ENCODE measurements at regions of chr16 and their contacts with region 1.

Region 1: GRCh38 chr16:58123896-58124600 is 5.1 kb downstream of the CFAP20 start:
- DNase-seq: no peak
- H3K4me3 ChIP-seq: no peak overlapping the region
- H3K27ac ChIP-seq: peak overlapping the region; percentile 96
- H3K4me1 ChIP-seq: peaks cover 97% of the 10 kb centered on the region
- H3K27me3 ChIP-seq: no peaks in the 10 kb centered on the region
- CTCF ChIP-seq: no peak

Region 2: DNA sequence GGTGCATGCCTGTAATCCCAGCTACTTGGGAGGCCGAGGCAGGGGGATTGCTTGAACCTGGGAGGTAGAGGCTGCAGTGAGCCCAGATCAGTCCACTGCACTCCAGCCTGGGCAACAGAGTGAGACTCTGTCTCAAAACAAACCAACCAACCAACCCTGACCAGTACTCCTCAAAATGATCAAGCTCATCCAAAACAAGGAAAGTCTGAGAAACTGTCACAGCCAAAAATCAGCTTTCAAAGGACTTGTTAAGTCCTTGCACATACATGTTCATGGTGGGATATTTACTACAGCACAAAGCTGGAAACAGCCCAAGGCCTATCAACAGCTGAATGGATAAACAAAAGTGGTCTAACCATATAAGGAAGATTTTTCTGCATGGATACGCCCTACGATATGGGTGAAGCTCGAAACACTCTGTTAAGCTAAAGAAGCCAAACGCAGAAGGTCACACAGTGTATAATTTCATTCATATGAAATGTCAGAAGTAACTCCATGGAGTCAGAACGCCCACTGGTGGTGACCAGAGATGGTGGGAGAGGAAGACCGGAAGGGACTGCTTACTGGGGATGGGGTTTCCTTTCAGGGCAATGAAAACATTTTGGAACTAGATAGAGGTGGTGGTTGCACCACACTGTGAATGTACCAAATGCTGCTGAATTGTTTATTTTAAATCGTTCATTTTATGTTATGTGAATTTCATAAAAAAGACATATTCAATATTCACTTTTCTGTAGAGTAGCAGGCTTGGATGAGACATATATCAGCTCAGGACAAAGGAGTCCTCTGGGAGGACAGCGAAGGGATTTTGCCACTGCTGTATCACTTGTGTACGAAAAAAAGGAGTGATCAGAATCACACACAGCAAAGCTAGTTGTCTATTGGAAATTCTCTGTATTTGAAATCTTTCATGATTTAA is 701.8 kb before region 1 on chr16:
- intact Hi-C with region 1: no loop called
- DNase-seq: no peak
- H3K4me3 ChIP-seq: no peak overlapping the region
- H3K27ac ChIP-seq: peak overlapping the region; percentile 56
- H3K4me1 ChIP-seq: peaks cover 49% of the 10 kb centered on the region
- H3K27me3 ChIP-seq: no peaks in the 10 kb centered on the region
- CTCF ChIP-seq: peak; percentile 76

Region 3: DNA sequence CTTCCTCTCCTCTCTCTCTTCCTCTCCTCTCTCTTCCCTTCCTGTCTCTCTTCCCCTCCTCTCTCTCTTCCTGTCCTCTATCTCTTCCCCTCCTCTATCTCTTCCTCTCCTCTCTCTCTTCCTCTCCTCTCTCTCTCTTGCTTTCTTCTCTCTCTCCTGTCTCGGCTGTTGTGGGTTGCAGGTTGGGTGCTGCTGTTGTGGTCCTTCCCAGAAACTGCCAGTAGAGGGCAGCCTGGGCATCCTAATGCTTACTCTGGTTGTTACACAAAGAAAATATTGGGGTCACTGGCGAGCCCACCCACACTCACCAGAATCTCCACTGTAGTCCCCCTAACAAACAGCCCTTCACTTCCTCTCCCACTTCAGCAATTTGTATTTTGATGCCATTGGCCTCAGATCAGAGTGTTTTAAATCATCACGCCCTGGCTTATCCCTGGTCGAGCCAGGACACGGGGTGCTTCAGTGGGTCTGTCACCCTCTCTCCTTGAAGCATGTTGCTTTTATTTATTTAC is 103.4 kb before region 1 on chr16:
- intact Hi-C with region 1: loop called (anchors 2 kb)
- DNase-seq: peak; percentile 59
- H3K4me3 ChIP-seq: no peak overlapping the region
- H3K27ac ChIP-seq: no peak overlapping the region
- H3K4me1 ChIP-seq: peaks cover 53% of the 10 kb centered on the region
- H3K27me3 ChIP-seq: no peaks in the 10 kb centered on the region
- CTCF ChIP-seq: peak; percentile 85

Region 4: DNA sequence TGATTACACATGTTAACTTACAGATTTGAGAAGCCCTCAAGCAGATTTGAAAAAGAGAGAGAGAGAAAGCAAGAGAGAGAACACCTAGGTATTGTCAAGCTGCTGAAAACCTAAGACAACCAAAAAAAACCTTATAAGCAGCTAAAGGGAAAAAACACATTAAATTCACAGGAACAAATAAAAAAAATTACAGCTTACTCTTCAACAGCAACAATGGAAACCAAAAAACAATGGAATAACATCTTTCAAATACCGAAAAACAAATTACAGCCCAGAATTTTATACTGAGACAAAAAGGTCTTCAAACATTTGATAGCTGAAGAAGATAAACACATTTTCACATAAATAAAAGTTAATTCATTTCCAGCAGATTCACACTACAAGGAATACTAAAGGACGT is 13.5 kb after region 1 on chr16:
- intact Hi-C with region 1: no loop called
- DNase-seq: no peak
- H3K4me3 ChIP-seq: no peak overlapping the region
- H3K27ac ChIP-seq: no peak overlapping the region
- H3K4me1 ChIP-seq: no peaks in the 10 kb centered on the region
- H3K27me3 ChIP-seq: no peaks in the 10 kb centered on the region
- CTCF ChIP-seq: no peak

Region 5: GRCh38 chr16:58365623-58366022 is 241.6 kb after region 1 on chr16:
- intact Hi-C with region 1: no loop called
- DNase-seq: no peak
- H3K4me3 ChIP-seq: no peak overlapping the region
- H3K27ac ChIP-seq: no peak overlapping the region
- H3K4me1 ChIP-seq: no peaks in the 10 kb centered on the region
- H3K27me3 ChIP-seq: no peaks in the 10 kb centered on the region
- CTCF ChIP-seq: no peak

Region 6: GRCh38 chr16:58451945-58452401 is 327.9 kb after region 1 on chr16:
- intact Hi-C with region 1: no loop called
- DNase-seq: no peak
- H3K4me3 ChIP-seq: no peak overlapping the region
- H3K27ac ChIP-seq: peak overlapping the region; percentile 76
- H3K4me1 ChIP-seq: peaks cover 23% of the 10 kb centered on the region
- H3K27me3 ChIP-seq: no peaks in the 10 kb centered on the region
- CTCF ChIP-seq: no peak